Psoas muscle (tissue), 8 donors: ENCODE measurements at regions of chr4 and their contacts with region 1.

Region 1: GRCh38 chr4:139515531-139515958 is 40.5 kb downstream of the SETD7 start:
- DNase-seq: no peak
- ATAC-seq: peak; percentile 57 to 87 (median 72)
- H3K4me3 ChIP-seq: no peak overlapping the region
- H3K27ac ChIP-seq: peak overlapping the region; percentile 66
- H3K4me1 ChIP-seq: peaks cover 40% of the 10 kb centered on the region
- H3K27me3 ChIP-seq: no peaks in the 10 kb centered on the region
- CTCF ChIP-seq: no peak

Region 2: DNA sequence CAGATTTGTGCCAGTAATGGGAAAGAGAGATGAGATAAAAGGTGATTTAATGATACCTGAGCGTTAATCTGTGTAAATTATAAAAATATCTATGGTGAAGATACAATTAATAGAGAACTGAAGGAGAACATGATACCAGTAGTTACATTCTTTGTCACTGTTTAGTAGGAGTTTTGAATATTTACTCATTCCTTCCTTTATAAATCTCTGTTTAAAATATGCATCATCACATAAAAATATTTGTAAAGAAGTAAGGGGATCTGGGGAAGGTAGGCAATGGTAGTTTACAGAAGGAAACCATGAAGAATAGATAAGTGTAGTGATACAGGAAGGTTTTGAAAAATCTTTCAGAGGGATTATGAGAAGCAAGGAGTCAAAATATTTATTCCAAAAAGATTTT is 1792.6 kb before region 1 on chr4:
- intact Hi-C with region 1: no loop called
- DNase-seq: no peak
- ATAC-seq: no peak
- H3K4me3 ChIP-seq: no peak overlapping the region
- H3K27ac ChIP-seq: no peak overlapping the region
- H3K4me1 ChIP-seq: no peaks in the 10 kb centered on the region
- H3K27me3 ChIP-seq: no peaks in the 10 kb centered on the region
- CTCF ChIP-seq: no peak

Region 3: GRCh38 chr4:139560406-139561104 is 45.0 kb after region 1 on chr4:
- intact Hi-C with region 1: loop called in 1 of 2 experiments (anchors 5 kb)
- DNase-seq: no peak
- ATAC-seq: no peak
- H3K4me3 ChIP-seq: no peak overlapping the region
- H3K27ac ChIP-seq: peak overlapping the region; percentile 52
- H3K4me1 ChIP-seq: peaks cover 10% of the 10 kb centered on the region
- H3K27me3 ChIP-seq: no peaks in the 10 kb centered on the region
- CTCF ChIP-seq: no peak